Psoas muscle (tissue), 8 donors: ENCODE measurements at regions of chr19 and their contacts with region 1.

Region 1: GRCh38 chr19:3184847-3185481 is 766 bp upstream of the NCLN start:
- DNase-seq: peak; percentile 73 to 86
- ATAC-seq: peak; percentile 59 to 75 (median 64)
- H3K4me3 ChIP-seq: peak overlapping the region; percentile 84
- H3K27ac ChIP-seq: peak overlapping the region; percentile 76
- H3K4me1 ChIP-seq: peaks cover 16% of the 10 kb centered on the region
- H3K27me3 ChIP-seq: no peaks in the 10 kb centered on the region
- CTCF ChIP-seq: no peak

Region 2: DNA sequence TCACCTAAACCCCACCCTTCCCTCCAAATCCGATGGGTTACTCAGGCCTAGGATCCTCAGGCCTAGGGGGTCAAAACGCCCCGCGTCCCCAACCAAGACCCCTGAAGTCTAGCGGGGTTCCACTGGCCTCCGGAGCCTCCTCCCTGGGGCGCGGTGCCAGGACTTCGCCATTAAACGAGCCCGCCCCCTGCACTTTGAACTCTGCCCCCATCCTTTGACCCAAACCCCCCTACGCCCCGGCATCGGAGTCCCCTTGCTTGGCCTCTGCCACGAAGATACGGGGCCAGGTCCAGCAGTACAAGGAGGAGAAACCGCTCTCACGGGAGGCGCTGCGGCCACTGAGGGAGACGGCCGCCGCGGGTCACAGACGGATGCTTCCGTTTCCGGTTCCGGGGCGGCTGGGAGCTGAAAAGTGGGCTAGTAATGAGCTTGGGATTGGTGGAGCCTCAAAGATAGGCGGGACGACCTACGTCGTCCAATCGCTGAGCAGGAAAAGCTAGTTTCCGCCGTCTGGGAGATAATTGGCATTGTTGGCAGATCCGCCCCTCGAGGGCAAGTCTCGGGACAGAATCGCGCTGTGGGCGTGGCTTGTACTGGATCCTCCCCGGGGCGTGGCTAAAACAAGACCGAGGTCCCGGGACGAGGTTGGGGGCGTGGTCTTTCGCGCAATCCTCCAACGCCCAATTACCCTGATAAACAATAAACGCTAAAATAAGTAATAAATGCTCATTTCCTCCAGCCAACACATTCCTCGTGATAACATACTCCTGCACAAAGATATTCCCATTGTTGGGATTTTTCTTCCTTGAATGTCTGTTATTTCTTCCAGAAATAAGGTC is 234.5 kb before region 1 on chr19:
- intact Hi-C with region 1: loop called in 1 of 2 experiments (anchors 5 kb)
- DNase-seq: peak; percentile 100
- ATAC-seq: peak; percentile 97 to 98 (median 97)
- H3K4me3 ChIP-seq: peak overlapping the region; percentile 79
- H3K27ac ChIP-seq: peak overlapping the region; percentile 91
- H3K4me1 ChIP-seq: peaks cover 13% of the 10 kb centered on the region
- H3K27me3 ChIP-seq: no peaks in the 10 kb centered on the region
- CTCF ChIP-seq: no peak

Region 3: DNA sequence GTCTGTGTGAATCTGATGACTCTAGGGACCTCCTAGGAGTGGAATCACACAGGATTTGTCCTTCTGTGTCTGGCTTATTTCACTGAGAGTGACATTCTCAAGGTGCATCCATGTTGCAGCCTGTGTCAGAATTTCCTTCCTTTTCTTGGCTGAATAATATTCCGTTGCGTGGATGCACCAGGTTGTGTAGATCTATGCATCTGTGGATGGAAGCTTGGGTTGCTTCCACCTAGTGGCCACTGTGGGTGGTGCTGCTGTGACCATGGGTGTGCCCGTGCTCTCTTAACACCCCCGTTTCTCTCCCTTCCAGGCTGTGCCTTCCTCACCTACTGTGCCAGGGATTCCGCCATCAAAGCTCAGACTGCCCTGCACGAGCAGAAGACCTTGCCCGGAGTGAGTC is 65.7 kb after region 1 on chr19:
- intact Hi-C with region 1: no loop called
- DNase-seq: no peak
- ATAC-seq: no peak
- H3K4me3 ChIP-seq: no peak overlapping the region
- H3K27ac ChIP-seq: no peak overlapping the region
- H3K4me1 ChIP-seq: no peaks in the 10 kb centered on the region
- H3K27me3 ChIP-seq: peaks cover 0 to 22% (median 5%) of the 10 kb centered on the region in 3 donors
- CTCF ChIP-seq: peak; percentile 32